Gastrocnemius medialis (tissue), 4 donors: ENCODE measurements at regions of chr22 and their contacts with region 1.

Region 1: DNA sequence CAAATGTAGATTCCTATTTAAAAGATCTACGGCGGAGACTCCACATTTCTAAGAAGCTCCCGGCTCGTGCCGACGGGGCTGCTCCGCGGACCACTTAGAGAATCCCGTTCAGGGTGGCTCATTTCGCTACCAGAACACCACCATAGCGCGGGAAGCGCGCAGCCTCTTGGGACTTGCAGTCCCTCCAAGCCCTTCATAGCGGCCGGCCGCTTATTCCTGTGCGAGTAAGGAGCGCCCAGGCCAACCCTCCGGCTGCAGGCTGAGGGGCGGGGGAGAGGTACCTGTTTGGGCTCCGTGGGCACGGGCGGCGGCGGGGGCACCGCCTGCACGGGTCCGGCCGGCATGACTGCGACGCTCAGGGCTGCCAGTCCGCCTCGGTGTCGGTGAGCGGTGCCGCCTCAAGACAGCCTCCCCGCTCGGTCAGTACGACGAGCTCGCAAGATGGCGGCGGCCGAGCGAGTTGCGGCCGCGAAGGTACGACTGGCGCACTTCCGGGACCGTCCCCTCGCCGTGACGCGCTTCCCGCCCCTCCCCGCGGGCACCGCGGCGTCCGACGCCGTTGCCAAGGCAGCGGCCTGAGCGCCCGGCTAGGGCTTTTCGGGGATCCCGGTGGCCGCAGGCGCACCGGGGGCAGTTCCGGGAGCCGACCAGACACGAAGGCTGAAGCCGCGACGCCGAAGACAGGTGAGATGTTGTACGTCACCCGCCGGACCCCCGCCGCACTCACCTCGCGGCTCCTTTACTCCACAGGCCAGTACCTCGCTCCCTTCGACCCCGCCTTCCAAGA is at the starts of genes CCDC157 and SF3A1:
- DNase-seq: peak; percentile 75 to 81
- ATAC-seq: peak; percentile 98
- H3K4me3 ChIP-seq: peak within 1 kb of the TSS; percentile 78 to 98 (median 92)
- H3K27ac ChIP-seq: peak within 1 kb of the TSS; percentile 93 to 97 (median 94)
- H3K4me1 ChIP-seq: peaks cover 23 to 32% of the 10 kb centered on the region in 2 donors
- H3K27me3 ChIP-seq: no peaks in the 10 kb centered on the region
- CTCF ChIP-seq: no peak
- POLR2A ChIP-seq: peak; percentile 85 to 86
- total RNA-seq, gene CCDC157: 0.41 to 1.4 (median 1.1) TPM
- total RNA-seq, gene SF3A1: 36.0 to 145 (median 94.5) TPM

Region 2: DNA sequence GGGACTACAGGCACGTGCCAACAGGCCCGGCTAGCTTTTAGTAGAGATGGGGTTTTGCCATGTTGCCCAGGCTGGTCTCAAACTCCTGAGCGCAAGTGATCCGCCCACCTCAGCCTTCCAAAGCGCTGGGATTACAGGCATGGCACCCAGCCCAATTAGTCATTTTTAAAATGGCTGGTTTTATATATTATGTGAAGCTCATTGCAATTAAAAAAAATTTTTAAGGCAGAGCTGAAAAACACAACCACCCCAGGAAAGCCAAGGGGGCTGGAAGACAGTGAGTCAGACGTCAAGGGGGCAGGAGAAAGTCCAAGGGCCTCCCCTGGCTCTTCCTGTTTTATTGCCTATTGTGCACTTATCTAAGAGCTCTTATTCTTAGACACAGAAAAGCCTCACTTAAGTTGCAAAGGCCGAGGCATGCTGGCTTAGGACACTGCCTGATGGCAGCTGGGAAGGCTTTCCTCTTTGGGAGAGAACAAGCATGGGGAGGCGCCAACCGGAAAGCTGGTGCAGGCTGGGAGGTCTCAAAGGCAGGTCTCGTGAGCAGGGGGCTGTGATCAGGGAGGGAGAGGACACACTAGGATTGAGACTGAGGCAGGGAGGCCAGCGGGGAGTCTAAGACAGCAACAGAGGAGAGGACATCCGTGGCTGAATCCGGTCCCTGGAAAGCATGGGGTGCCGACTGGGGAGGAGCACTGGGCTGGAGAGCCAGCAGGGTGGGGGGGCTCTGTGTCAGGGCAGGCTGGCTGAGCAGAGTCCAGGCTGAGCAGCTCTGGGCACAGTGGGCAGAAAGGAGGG is 78.9 kb before region 1 on chr22:
- in situ Hi-C with region 1: no loop called
- intact Hi-C with region 1: no loop called
- DNase-seq: no peak
- ATAC-seq: no peak
- H3K4me3 ChIP-seq: no peak overlapping the region
- H3K27ac ChIP-seq: no peak overlapping the region
- H3K4me1 ChIP-seq: no peaks in the 10 kb centered on the region
- H3K27me3 ChIP-seq: no peaks in the 10 kb centered on the region
- CTCF ChIP-seq: no peak
- POLR2A ChIP-seq: no peak

Region 3: DNA sequence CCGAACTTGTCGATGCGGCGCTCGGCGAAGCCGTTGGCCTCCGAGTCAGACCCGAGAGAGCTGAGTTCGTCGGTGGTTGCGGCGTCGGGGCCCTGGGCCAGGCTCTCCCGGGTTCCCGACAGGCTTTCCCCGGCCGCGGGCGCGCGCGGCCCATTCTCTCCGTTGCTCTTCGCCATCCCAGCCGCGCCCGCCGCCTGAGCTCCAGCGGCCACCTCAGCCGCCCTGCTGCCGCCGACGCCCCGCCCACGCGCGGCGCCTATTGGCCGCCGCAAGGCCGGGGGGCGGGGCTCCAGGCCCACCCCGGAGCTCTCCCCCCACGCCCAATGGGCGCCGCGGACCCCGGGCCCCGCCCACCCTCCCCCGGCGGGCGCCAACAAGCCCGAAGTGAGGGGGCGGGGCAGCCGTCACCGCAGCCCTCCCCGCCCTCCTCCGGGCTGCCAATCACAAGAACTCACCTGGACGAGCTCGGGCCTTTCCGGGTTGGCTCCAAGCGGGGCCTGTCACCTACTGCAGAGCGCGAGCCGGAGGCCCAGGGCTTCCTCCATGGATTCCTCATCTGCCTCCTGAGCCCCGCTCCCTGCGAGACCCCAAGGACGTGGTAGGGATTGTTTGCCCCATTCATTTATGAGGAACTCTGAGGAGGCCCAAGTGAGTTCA is 29.8 kb before region 1 on chr22 and contains the start of gene TBC1D10A:
- in situ Hi-C with region 1: no loop called
- intact Hi-C with region 1: loop called (anchors 1 kb)
- DNase-seq: peak; percentile 73 to 88
- ATAC-seq: peak; percentile 84 to 92
- H3K4me3 ChIP-seq: peak within 1 kb of the TSS; percentile 83 to 99 (median 87)
- H3K27ac ChIP-seq: peak within 1 kb of the TSS; percentile 81 to 84 (median 82)
- H3K4me1 ChIP-seq: peaks cover 21 to 30% of the 10 kb centered on the region in 2 donors
- H3K27me3 ChIP-seq: no peaks in the 10 kb centered on the region
- CTCF ChIP-seq: no peak
- POLR2A ChIP-seq: peak; percentile 75 to 84
- total RNA-seq, gene TBC1D10A: 4.1 to 9.6 (median 6.2) TPM